ENCODE measurements at regions of chr15 and their contacts with region 1.

Region 1: DNA sequence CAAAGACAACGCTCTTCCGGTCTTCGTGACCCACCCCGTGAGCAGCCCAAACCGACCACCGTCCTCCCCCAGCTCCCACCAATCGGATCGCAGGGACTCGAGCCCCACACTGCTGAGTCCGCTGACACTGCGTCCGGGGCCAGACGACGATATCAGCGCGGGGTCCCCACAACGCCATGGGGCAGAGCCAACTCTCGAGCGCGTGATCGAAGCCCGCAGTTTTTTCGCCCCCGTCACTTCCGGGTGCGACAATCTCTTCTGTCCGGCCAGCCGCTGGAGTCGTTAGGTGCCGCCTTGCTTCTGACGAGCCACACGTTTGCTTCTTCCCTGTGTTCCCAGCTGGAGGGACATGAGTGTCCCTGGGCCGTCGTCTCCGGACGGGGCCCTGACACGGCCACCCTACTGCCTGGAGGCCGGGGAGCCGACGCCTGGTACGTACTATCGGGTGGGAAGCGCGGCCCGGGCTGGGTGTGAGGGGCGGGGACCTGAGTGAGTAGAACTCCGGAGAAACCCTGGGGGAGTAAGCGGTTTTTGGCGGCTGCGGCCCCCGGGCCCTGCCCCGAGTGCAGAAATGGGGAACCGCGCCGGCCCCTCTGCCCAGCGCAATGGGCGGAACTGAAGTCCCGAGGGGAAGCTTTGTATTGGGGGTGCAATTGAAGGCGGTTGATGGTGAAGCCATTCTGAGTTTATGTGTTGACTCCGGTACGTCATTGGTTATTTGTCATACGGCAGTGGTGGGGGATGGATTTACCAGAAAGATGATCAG is at the start of gene BLOC1S6:
- DNase-seq: peak; percentile 92
- ATAC-seq: peak; percentile 90
- H3K4me3 Mint-ChIP-seq: peak within 1 kb of the TSS; percentile 97
- H3K27ac Mint-ChIP-seq: peak within 1 kb of the TSS; percentile 100
- H3K4me1 Mint-ChIP-seq: peaks cover 34% of the 10 kb centered on the region
- H3K27me3 Mint-ChIP-seq: no peaks in the 10 kb centered on the region
- total RNA-seq, gene BLOC1S6: 40.1 to 40.6 TPM

Region 2: DNA sequence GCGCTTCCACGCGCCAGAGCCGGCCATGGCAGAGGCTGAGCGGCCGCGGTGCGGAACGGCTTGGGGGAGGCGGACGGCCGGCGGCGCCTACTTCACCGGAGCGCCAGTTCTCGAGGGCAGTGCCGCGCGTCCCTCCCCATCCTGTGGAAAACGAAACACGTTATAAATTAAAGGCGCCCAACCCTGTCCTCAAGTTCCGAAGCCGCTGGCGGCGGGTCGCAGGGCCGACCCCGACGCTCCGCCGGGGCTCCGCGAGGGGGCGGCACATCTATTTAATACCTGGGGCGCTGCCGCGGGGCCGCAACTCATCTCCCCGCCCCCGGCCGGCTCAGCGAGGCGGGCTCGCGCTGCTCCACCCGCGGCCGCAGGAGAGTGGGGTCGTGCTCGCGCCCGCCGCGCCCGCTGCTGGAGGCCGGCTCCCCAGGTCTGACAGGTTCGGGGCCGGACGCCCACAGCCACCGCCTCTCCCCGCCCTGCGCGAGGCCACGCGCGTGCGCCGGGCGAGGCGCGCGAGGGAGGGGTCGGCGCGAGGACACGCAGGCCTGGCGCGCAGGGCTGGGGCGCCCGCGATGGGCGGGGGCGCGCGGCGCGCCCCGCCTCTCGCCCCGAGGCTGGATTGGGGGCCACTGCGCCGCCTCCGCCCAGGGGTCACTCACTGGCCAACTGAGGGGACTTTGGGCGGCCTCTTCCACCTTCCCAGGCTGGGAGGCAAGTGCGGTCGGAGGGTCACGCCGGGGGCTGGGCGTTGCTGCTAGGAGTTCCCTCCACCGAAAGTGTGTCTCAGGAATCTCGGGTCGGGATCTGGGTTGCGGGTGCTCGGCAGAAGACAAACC is 64.7 kb before region 1 on chr15 and contains the start of gene SLC30A4:
- POLR2A ChIA-PET with region 1: interaction called, 11 read pairs
- DNase-seq: peak; percentile 80
- ATAC-seq: peak; percentile 83
- H3K4me3 Mint-ChIP-seq: peak within 1 kb of the TSS; percentile 94
- H3K27ac Mint-ChIP-seq: peak within 1 kb of the TSS; percentile 73
- H3K4me1 Mint-ChIP-seq: peaks cover 19% of the 10 kb centered on the region
- H3K27me3 Mint-ChIP-seq: peaks cover 19% of the 10 kb centered on the region
- total RNA-seq, gene SLC30A4: 3.2 to 3.5 TPM

Region 3: DNA sequence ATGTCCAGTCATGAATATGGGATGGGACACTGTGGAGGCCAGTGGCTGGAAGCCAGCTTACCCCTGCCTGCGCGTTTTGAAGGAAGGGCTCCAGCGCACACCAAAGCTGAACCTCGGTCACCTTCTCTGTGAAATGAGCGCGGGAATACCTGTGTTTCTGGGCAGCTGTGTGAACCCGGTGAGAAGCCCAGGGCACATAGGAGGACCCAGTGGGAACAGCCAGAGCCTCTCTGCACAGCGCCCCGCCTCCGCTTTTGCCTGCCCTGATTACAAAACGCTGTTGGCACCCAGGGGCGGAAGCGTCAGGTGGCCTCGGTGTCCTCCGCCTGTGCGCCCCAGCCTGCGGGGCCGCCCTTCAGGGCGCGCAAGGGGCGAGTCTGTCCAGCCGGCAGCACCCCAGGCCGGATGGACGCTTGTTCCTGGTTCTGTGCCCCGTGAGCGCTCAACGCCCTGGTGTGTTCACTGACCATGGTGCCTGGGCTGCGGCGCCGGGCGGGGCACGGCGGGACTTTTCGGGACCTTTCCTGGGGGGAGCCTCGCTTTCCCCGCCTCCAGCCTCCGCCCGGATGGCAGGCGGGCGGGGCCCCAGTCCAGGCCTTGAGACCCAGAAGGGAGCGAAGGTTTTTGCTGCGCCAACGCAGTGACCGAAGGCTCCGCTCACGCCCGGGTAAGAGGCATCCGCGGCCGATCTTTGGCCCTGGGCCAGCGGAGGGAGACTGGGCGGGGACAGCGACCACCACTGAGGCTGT is 47.3 kb after region 1 on chr15 and contains the start of gene SQOR:
- POLR2A ChIA-PET with region 1: interaction called, 17 read pairs
- DNase-seq: peak; percentile 81
- ATAC-seq: peak; percentile 69
- H3K4me3 Mint-ChIP-seq: peak within 1 kb of the TSS; percentile 96
- H3K27ac Mint-ChIP-seq: peak within 1 kb of the TSS; percentile 93
- H3K4me1 Mint-ChIP-seq: peaks cover 29% of the 10 kb centered on the region
- H3K27me3 Mint-ChIP-seq: peaks cover 5% of the 10 kb centered on the region
- total RNA-seq, gene SQOR: 65.6 to 66.8 TPM

Measured in activated naive CD8-positive, alpha-beta T cell treated with anti-CD3 and anti-CD28 coated beads, Interleukin-2, amount 10 ng/mL, durations not matched to agents 7 days and 5 days (primary cell).